Sciatic nerve (tissue), 2 donors: ENCODE measurements at regions of chr10 and their contacts with region 1.

Region 1: DNA sequence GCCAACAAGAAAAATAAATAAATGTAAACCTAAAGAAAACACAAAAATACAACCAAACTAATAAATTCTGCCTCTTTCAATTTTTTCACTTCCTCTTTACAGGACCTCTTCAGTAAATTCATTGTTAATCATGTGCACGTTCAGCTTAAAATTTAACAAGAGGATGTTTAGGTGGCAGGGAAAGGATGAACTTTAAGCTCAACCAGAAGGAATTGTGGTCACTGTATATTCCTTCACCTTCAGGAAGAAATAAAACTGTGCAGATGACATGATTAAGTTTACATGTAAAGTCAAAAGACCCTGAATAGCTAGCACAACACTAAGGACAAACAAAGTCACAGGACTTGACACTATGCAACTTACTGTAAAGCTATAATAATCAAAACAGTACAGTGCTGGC is 33.0 kb downstream of the KIF5B start:
- DNase-seq: no peak
- ATAC-seq: no peak

Region 2: GRCh38 chr10:30467651-30468338 is 1555.5 kb before region 1 on chr10:
- intact Hi-C with region 1: loop called (anchors 10 kb)
- DNase-seq: no peak
- ATAC-seq: no peak

Region 3: GRCh38 chr10:32795598-32796183 is 772.4 kb after region 1 on chr10:
- intact Hi-C with region 1: no loop called
- DNase-seq: no peak
- ATAC-seq: peak; percentile 52